ENCODE measurements at regions of chr3 and their contacts with region 1.

Region 1: DNA sequence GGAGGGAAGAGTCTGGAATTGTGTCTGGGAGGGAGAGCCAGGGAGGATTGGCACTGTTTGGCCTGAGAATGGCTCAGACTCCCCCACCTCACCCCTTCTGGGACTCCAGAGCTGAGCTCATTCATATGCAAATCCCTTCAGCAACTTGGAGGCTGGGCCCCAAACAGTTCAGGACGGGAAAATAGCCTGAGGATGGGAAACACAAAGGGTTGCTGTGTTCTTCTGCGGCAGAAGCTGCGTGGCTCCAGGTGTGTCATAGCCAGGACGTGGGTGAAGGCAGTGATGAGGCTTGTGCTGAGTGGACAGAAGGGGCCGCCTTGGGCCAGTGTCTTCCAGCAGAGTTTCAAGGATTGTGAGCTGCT is 16.6 kb downstream of the MASP1 start:
- DNase-seq: peak; percentile 77
- ATAC-seq: peak; percentile 99
- H3K4me3 Mint-ChIP-seq: peak overlapping the region; percentile 28; the same call in 1 of the 2 replicates
- H3K27ac Mint-ChIP-seq: peak overlapping the region; percentile 87
- H3K4me1 Mint-ChIP-seq: peaks cover 39% of the 10 kb centered on the region
- H3K27me3 Mint-ChIP-seq: no peaks in the 10 kb centered on the region
- CTCF ChIP-seq: no peak

Region 2: GRCh38 chr3:187252311-187252710 is 22.6 kb before region 1 on chr3:
- CTCF ChIA-PET with region 1: interaction called, 15 read pairs
- POLR2A ChIA-PET with region 1: no interaction called
- DNase-seq: no peak
- ATAC-seq: no peak
- H3K4me3 Mint-ChIP-seq: no peak overlapping the region
- H3K27ac Mint-ChIP-seq: no peak overlapping the region
- H3K4me1 Mint-ChIP-seq: peaks cover 24% of the 10 kb centered on the region
- H3K27me3 Mint-ChIP-seq: no peaks in the 10 kb centered on the region; the same call in 1 of the 2 replicates
- CTCF ChIP-seq: no peak

Region 3: DNA sequence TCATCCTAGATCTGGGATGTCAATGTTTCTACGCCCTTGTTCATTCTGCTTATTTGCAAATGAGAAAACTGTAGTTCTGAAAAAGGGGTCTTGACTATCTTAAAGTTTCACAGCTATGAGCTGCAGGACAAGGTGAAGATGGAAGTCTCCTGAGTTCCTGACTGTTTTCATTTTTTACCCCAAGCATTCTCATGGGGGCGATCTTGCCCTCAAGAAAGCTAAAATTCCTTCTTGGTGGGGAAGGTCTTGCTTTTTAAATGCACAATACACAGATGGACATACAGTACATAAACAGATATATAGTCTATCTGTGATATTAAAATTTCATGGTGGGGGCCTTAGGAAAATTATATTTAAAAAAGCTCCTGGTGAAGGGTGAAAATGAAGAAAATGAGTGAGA is 15.8 kb before region 1 on chr3:
- CTCF ChIA-PET with region 1: interaction called, 10 read pairs
- POLR2A ChIA-PET with region 1: interaction called, 3 read pairs
- DNase-seq: no peak
- ATAC-seq: 0 out of 2 replicates have a peak, but pooled peaks have one; percentile 26
- H3K4me3 Mint-ChIP-seq: no peak overlapping the region
- H3K27ac Mint-ChIP-seq: no peak overlapping the region
- H3K4me1 Mint-ChIP-seq: peaks cover 16% of the 10 kb centered on the region
- H3K27me3 Mint-ChIP-seq: no peaks in the 10 kb centered on the region
- CTCF ChIP-seq: no peak

Measured in WTC11 (cell line).